ENCODE measurements at regions of chr5 and their contacts with region 1.

Region 1: DNA sequence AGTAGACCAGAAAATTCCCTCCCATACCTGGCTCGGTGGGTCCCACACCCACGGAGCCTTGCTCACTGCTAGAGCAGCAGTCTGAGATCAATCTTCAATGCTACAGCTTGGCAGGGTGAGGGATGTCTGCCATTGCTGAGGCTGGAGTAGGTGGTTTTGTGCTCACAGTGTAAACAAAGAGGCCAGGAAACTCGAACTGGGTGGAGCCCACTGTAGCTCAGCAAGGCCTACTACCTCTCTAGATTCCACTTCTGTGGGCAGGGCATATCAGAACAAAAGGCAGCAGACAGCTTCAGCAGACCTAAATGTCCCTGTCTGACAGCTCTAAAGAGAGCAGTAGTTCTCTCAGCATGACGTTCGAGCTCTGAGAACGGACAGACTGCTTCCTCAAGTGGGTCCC is 5.6 kb upstream of the GZMA start:
- DNase-seq: no peak
- H3K4me3 ChIP-seq: no peak overlapping the region
- H3K27ac ChIP-seq: no peak overlapping the region
- H3K4me1 ChIP-seq: no peaks in the 10 kb centered on the region
- H3K27me3 ChIP-seq: no peaks in the 10 kb centered on the region
- CTCF ChIP-seq: no peak

Region 2: GRCh38 chr5:54874373-54874921 is 222.4 kb before region 1 on chr5:
- CTCF ChIA-PET with region 1: no interaction called
- dilution Hi-C with region 1: no loop called
- in situ Hi-C with region 1: no loop called
- intact Hi-C with region 1: no loop called
- DNase-seq: peak; percentile 21
- H3K4me3 ChIP-seq: no peak overlapping the region
- H3K27ac ChIP-seq: no peak overlapping the region
- H3K4me1 ChIP-seq: no peaks in the 10 kb centered on the region
- H3K27me3 ChIP-seq: peaks cover 3% of the 10 kb centered on the region
- CTCF ChIP-seq: no peak

Region 3: GRCh38 chr5:55030220-55030619 is 66.6 kb before region 1 on chr5:
- CTCF ChIA-PET with region 1: no interaction called
- dilution Hi-C with region 1: loop called (anchors 5 kb)
- in situ Hi-C with region 1: no loop called
- intact Hi-C with region 1: no loop called
- DNase-seq: no peak
- H3K4me3 ChIP-seq: no peak overlapping the region
- H3K27ac ChIP-seq: no peak overlapping the region
- H3K4me1 ChIP-seq: no peaks in the 10 kb centered on the region
- H3K27me3 ChIP-seq: peaks cover 7% of the 10 kb centered on the region
- CTCF ChIP-seq: no peak